ENCODE measurements at regions of chr7 and their contacts with region 1.

Region 1: GRCh38 chr7:29639881-29640595 is 76.4 kb downstream of the PRR15 start:
- DNase-seq: no peak
- ATAC-seq: no peak
- H3K4me3 ChIP-seq: no peak overlapping the region
- H3K4me3 Mint-ChIP-seq: no peak overlapping the region
- H3K27ac ChIP-seq: no peak overlapping the region
- H3K27ac Mint-ChIP-seq: no peak overlapping the region
- H3K4me1 ChIP-seq: no peaks in the 10 kb centered on the region
- H3K4me1 Mint-ChIP-seq: no peaks in the 10 kb centered on the region
- H3K27me3 ChIP-seq: no peaks in the 10 kb centered on the region
- H3K27me3 Mint-ChIP-seq: no peaks in the 10 kb centered on the region

Region 2: DNA sequence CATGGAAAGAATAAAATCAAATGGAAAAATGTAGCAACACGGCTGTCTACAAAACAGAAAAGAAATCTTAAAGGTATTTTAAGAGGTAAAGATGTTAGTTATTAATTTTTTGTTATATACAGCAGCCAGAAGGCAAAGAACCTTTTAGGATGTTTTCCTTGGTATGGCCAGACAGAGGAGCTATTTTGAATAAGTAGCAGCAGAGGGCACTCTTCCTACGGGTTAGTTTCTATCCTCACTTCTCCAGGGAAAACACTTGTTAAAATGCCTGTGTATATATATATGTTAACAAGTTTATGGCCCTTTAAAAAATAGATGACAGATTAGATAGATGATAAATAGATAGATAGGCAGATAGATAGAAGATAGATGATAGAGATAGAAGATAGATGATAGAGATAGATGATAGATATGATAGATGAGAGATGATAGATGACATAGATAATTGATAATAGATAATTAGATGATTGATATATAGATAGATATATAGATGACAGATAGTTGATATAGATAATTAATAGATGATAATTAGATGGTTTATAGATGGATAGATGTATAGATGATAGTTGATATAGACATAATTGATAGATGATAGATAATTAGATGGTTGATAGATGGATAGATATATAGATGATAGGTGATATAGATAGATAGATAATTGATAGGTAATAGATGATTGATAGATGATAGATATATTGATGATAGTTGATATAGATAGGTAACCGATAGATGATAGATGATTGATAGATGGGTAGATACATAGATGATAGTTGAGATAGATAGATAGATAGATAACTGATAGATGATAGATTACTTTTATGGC is 108.5 kb after region 1 on chr7:
- CTCF ChIA-PET with region 1: no interaction called
- POLR2A ChIA-PET with region 1: no interaction called
- intact Hi-C with region 1: loop called in 1 of 2 experiments (anchors 2 kb)
- DNase-seq: peak in 1 of 9 donors; percentile 5
- ATAC-seq: no peak
- H3K4me3 ChIP-seq: no peak overlapping the region
- H3K4me3 Mint-ChIP-seq: no peak overlapping the region
- H3K27ac ChIP-seq: no peak overlapping the region
- H3K27ac Mint-ChIP-seq: no peak overlapping the region
- H3K4me1 ChIP-seq: no peaks in the 10 kb centered on the region
- H3K4me1 Mint-ChIP-seq: no peaks in the 10 kb centered on the region
- H3K27me3 ChIP-seq: no peaks in the 10 kb centered on the region
- H3K27me3 Mint-ChIP-seq: peaks cover 0 to 21% (median 5%) of the 10 kb centered on the region in 5 donors

Measured in naive thymus-derived CD4-positive, alpha-beta T cell (primary cell).